A673 (cell line): ENCODE measurements at regions of chrX and their contacts with region 1.

Region 1: GRCh38 chrX:19904778-19905367 is 17.5 kb upstream of the SH3KBP1 start:
- DNase-seq: peak; percentile 61
- H3K4me3 ChIP-seq: no peak overlapping the region
- H3K27ac ChIP-seq: no peak overlapping the region
- H3K4me1 ChIP-seq: no peaks in the 10 kb centered on the region
- H3K27me3 ChIP-seq: no peaks in the 10 kb centered on the region
- CTCF ChIP-seq: peak; percentile 75

Region 2: GRCh38 chrX:19776753-19777152 is 128.1 kb before region 1 on chrX:
- CTCF ChIA-PET with region 1: no interaction called
- POLR2A ChIA-PET with region 1: no interaction called
- intact Hi-C with region 1: no loop called
- DNase-seq: no peak
- H3K4me3 ChIP-seq: no peak overlapping the region
- H3K27ac ChIP-seq: no peak overlapping the region
- H3K4me1 ChIP-seq: peaks cover 4% of the 10 kb centered on the region
- H3K27me3 ChIP-seq: no peaks in the 10 kb centered on the region
- CTCF ChIP-seq: no peak

Region 3: GRCh38 chrX:19990556-19991349 is 85.9 kb after region 1 on chrX and contains the start of gene BCLAF3:
- CTCF ChIA-PET with region 1: no interaction called
- POLR2A ChIA-PET with region 1: no interaction called
- intact Hi-C with region 1: loop called (anchors 2 kb)
- DNase-seq: peak; percentile 88
- H3K4me3 ChIP-seq: peak within 1 kb of the TSS; percentile 66
- H3K27ac ChIP-seq: no peak within 1 kb of the TSS
- H3K4me1 ChIP-seq: no peaks in the 10 kb centered on the region
- H3K27me3 ChIP-seq: no peaks in the 10 kb centered on the region
- CTCF ChIP-seq: peak; percentile 59
- total RNA-seq, gene BCLAF3: 7.7 and 9.8 TPM in 2 replicates

Region 4: GRCh38 chrX:20060961-20061748 is 156.3 kb after region 1 on chrX:
- CTCF ChIA-PET with region 1: interaction called, 19 read pairs
- POLR2A ChIA-PET with region 1: no interaction called
- intact Hi-C with region 1: loop called (anchors 2 kb)
- DNase-seq: no peak
- H3K4me3 ChIP-seq: no peak overlapping the region
- H3K27ac ChIP-seq: no peak overlapping the region
- H3K4me1 ChIP-seq: no peaks in the 10 kb centered on the region
- H3K27me3 ChIP-seq: no peaks in the 10 kb centered on the region
- CTCF ChIP-seq: no peak

Region 5: GRCh38 chrX:20066968-20067708 is 162.3 kb after region 1 on chrX:
- CTCF ChIA-PET with region 1: interaction called, 19 read pairs
- POLR2A ChIA-PET with region 1: no interaction called
- intact Hi-C with region 1: loop called (anchors 2 kb)
- DNase-seq: peak; percentile 66
- H3K4me3 ChIP-seq: no peak overlapping the region
- H3K27ac ChIP-seq: no peak overlapping the region
- H3K4me1 ChIP-seq: peaks cover 7% of the 10 kb centered on the region
- H3K27me3 ChIP-seq: no peaks in the 10 kb centered on the region
- CTCF ChIP-seq: peak; percentile 65

Region 6: GRCh38 chrX:20135944-20136343 is 231.1 kb after region 1 on chrX:
- CTCF ChIA-PET with region 1: no interaction called
- POLR2A ChIA-PET with region 1: no interaction called
- intact Hi-C with region 1: loop called (anchors 2 kb)
- DNase-seq: no peak
- H3K4me3 ChIP-seq: no peak overlapping the region
- H3K27ac ChIP-seq: no peak overlapping the region
- H3K4me1 ChIP-seq: peaks cover 6% of the 10 kb centered on the region
- H3K27me3 ChIP-seq: no peaks in the 10 kb centered on the region
- CTCF ChIP-seq: no peak

Region 7: DNA sequence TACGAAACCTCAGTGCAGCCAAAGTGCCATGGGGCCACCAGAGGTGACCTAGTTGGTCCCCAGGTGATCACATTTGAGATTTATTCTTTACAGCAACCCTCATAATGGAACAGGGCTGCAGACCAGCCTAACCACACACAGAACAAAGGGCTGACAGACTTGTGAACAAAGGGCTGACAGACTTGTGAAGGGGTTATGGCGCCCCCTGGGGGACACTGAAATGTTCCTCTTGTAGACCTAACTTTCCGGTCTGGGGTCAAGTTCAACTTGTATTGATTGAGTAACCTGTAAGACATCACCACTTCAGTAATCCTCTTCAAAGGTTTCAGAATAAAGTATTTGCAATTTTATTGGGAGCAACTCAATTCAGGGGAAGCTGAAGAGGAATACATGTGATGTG is 537.7 kb after region 1 on chrX:
- CTCF ChIA-PET with region 1: no interaction called
- POLR2A ChIA-PET with region 1: no interaction called
- intact Hi-C with region 1: loop called (anchors 2 kb)
- DNase-seq: peak; percentile 85
- H3K4me3 ChIP-seq: no peak overlapping the region
- H3K27ac ChIP-seq: no peak overlapping the region
- H3K4me1 ChIP-seq: no peaks in the 10 kb centered on the region
- H3K27me3 ChIP-seq: no peaks in the 10 kb centered on the region
- CTCF ChIP-seq: peak; percentile 79